ENCODE measurements at regions of chrX and their contacts with region 1.

Region 1: DNA sequence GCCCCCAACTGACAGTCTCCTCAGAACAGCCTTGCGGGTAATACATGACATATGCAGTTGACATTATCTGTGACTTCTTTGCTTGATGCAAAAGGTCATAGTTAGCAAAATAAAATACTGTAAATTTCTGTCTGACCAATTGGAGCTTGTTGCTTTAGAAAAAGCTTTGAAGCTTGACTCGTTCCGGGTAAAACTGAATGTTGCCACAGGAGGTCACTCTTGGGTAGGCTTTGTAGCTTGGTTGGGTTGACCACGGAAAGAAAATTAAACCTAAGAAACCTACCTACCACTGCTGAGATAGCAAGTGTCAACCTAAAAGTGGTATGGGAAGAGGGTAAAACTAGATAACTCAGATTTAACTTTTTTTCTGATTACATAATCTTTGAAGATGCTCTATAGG is 23.2 kb downstream of the PRPS2 start:
- DNase-seq: peak; percentile 50
- ATAC-seq: peak; percentile 60
- H3K4me3 Mint-ChIP-seq: no peak overlapping the region
- H3K27ac Mint-ChIP-seq: no peak overlapping the region
- H3K4me1 Mint-ChIP-seq: no peaks in the 10 kb centered on the region
- H3K27me3 Mint-ChIP-seq: no peaks in the 10 kb centered on the region

Region 2: GRCh38 chrX:12447448-12448064 is 366.9 kb before region 1 on chrX:
- CTCF ChIA-PET with region 1: no interaction called
- POLR2A ChIA-PET with region 1: no interaction called
- intact Hi-C with region 1: no loop called
- DNase-seq: no peak
- ATAC-seq: no peak
- H3K4me3 Mint-ChIP-seq: no peak overlapping the region
- H3K27ac Mint-ChIP-seq: no peak overlapping the region
- H3K4me1 Mint-ChIP-seq: no peaks in the 10 kb centered on the region
- H3K27me3 Mint-ChIP-seq: no peaks in the 10 kb centered on the region

Region 3: DNA sequence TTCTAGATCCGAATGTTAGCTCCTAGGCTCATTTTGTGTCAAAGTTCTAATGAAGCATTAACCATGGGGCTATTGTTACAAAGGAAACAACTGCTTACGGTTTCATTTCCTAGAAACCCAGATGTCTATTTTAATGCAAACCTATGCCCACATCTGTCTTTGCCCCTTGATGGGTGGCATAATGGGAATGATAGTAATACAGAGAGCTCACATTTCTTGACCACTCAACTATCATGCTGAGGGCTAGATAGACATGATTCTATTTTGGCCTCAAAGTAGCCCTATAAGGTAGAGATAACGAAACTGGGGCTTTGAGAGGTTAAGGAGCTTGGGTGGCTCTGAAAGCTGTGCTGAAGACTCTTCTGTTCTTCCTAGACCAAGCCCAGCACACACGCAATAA is 54.3 kb after region 1 on chrX:
- CTCF ChIA-PET with region 1: no interaction called
- POLR2A ChIA-PET with region 1: no interaction called
- intact Hi-C with region 1: no loop called
- DNase-seq: no peak
- ATAC-seq: no peak
- H3K4me3 Mint-ChIP-seq: no peak overlapping the region
- H3K27ac Mint-ChIP-seq: no peak overlapping the region
- H3K4me1 Mint-ChIP-seq: peaks cover 5% of the 10 kb centered on the region
- H3K27me3 Mint-ChIP-seq: no peaks in the 10 kb centered on the region

Region 4: GRCh38 chrX:12894074-12895030 is 79.9 kb after region 1 on chrX:
- CTCF ChIA-PET with region 1: interaction called, 25 read pairs
- POLR2A ChIA-PET with region 1: no interaction called
- intact Hi-C with region 1: loop called (anchors 1 to 2 kb)
- DNase-seq: peak; percentile 67
- ATAC-seq: peak; percentile 28
- H3K4me3 Mint-ChIP-seq: no peak overlapping the region
- H3K27ac Mint-ChIP-seq: no peak overlapping the region
- H3K4me1 Mint-ChIP-seq: peaks cover 34% of the 10 kb centered on the region
- H3K27me3 Mint-ChIP-seq: no peaks in the 10 kb centered on the region

Region 5: GRCh38 chrX:12901486-12901885 is 87.1 kb after region 1 on chrX:
- CTCF ChIA-PET with region 1: interaction called, 25 read pairs
- POLR2A ChIA-PET with region 1: no interaction called
- intact Hi-C with region 1: no loop called
- DNase-seq: peak; percentile 81
- ATAC-seq: peak; percentile 61
- H3K4me3 Mint-ChIP-seq: no peak overlapping the region
- H3K27ac Mint-ChIP-seq: no peak overlapping the region
- H3K4me1 Mint-ChIP-seq: peaks cover 9% of the 10 kb centered on the region
- H3K27me3 Mint-ChIP-seq: no peaks in the 10 kb centered on the region

Region 6: DNA sequence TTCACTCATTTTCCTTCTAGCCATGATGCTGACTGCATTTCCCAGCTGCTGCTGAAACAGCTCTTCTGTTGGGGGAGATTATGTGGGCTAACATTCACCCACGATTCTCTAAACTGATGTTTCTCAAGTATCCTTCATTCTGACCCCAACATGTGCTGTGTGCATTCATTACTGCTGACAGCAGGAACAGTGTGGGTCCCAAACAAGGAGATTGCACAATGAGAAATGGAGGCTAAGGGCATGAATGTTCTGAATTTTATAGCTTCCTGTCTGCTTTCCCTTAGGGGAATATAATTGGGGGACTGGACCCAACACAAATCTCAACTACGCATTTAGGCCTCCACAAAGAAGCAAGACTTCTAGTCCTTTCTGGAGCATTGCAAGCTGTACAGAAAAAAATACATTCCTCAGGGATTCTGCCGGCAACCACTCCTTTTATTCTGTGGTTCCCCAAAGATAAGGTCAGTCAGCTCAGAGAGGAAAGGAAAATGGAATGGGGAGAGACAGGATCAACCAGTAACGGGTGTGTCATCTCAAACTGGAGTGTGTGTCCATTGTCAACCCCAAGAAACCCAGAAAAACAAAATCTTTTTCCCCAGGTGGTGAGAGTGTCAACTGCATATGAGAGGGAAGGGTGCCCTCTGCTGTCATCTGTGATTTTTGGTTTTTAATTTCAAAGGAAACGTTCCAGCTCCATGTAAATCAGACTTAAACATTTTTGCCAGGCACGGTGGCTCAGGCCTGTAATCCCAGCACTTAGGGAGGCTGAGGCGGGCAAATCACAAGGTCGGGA is 673.5 kb after region 1 on chrX:
- CTCF ChIA-PET with region 1: no interaction called
- POLR2A ChIA-PET with region 1: no interaction called
- intact Hi-C with region 1: loop called in 1 of 2 experiments (anchors 10 kb)
- DNase-seq: peak; percentile 50
- ATAC-seq: peak; percentile 86
- H3K4me3 Mint-ChIP-seq: no peak overlapping the region
- H3K27ac Mint-ChIP-seq: peak overlapping the region; percentile 74
- H3K4me1 Mint-ChIP-seq: peaks cover 18% of the 10 kb centered on the region
- H3K27me3 Mint-ChIP-seq: no peaks in the 10 kb centered on the region

Measured in activated CD4-positive, alpha-beta T cell treated with anti-CD3 and anti-CD28 coated beads for 36 hours (primary cell).